ENCODE measurements at regions of chr1 and their contacts with region 1.

Region 1: GRCh38 chr1:166910396-166910994 is 34.4 kb upstream of the TADA1 start:
- DNase-seq: peak; percentile 40 to 92 (median 69)
- ATAC-seq: peak; percentile 99 to 100 (median 100)
- H3K4me3 ChIP-seq: no peak overlapping the region
- H3K4me3 Mint-ChIP-seq: no peak overlapping the region
- H3K27ac ChIP-seq: no peak overlapping the region
- H3K27ac Mint-ChIP-seq: no peak overlapping the region
- H3K4me1 ChIP-seq: no peaks in the 10 kb centered on the region
- H3K4me1 Mint-ChIP-seq: peaks cover 0 to 7% (median 6%) of the 10 kb centered on the region in 3 donors
- H3K27me3 ChIP-seq: peaks cover 0 to 3% of the 10 kb centered on the region in 2 experiments
- H3K27me3 Mint-ChIP-seq: no peaks in the 10 kb centered on the region

Region 2: DNA sequence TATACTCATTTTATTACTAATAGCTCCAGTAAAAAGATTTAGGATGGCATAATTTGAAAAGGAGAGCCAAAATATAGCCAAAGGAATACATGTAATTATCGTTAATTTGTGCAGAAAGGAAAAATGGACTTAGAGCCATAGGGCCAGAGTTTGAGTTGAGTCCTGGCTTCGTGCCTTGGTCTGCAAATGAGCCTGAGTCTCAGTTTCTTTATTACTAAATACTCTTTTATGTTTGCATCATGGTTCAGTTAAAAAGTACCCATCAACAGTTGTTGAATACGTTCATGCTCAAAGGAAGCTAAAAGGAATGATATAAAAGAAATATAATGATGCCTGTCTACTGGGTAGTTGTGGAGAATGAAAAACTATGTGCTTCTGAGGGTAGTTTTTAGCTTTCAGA is 588.0 kb before region 1 on chr1:
- CTCF ChIA-PET with region 1: no interaction called
- POLR2A ChIA-PET with region 1: no interaction called
- DNase-seq: no peak
- ATAC-seq: no peak
- H3K4me3 ChIP-seq: no peak overlapping the region
- H3K4me3 Mint-ChIP-seq: no peak overlapping the region
- H3K27ac ChIP-seq: no peak overlapping the region
- H3K27ac Mint-ChIP-seq: no peak overlapping the region
- H3K4me1 ChIP-seq: no peaks in the 10 kb centered on the region
- H3K4me1 Mint-ChIP-seq: no peaks in the 10 kb centered on the region
- H3K27me3 ChIP-seq: no peaks in the 10 kb centered on the region
- H3K27me3 Mint-ChIP-seq: peaks cover 4 to 10% of the 10 kb centered on the region in 2 donors

Region 3: GRCh38 chr1:166875734-166876539 is 34.6 kb before region 1 on chr1 and contains the start of gene TADA1:
- CTCF ChIA-PET with region 1: interaction called in 1 of 2 experiments, 13 read pairs
- POLR2A ChIA-PET with region 1: no interaction called
- DNase-seq: peak; percentile 93 to 100 (median 99)
- ATAC-seq: peak; percentile 91 to 94 (median 93)
- H3K4me3 ChIP-seq: peak within 1 kb of the TSS; percentile 71 to 75
- H3K4me3 Mint-ChIP-seq: peak within 1 kb of the TSS; percentile 89 to 98 (median 98)
- H3K27ac ChIP-seq: peak within 1 kb of the TSS; percentile 75
- H3K27ac Mint-ChIP-seq: peak within 1 kb of the TSS; percentile 98 to 99
- H3K4me1 ChIP-seq: peaks cover 13 to 16% of the 10 kb centered on the region in 2 experiments
- H3K4me1 Mint-ChIP-seq: peaks cover 43 to 53% (median 50%) of the 10 kb centered on the region in 3 donors
- H3K27me3 ChIP-seq: no peaks in the 10 kb centered on the region
- H3K27me3 Mint-ChIP-seq: no peaks in the 10 kb centered on the region
- total RNA-seq, gene TADA1: 11.1 to 14.6 (median 12.8) TPM

Region 4: DNA sequence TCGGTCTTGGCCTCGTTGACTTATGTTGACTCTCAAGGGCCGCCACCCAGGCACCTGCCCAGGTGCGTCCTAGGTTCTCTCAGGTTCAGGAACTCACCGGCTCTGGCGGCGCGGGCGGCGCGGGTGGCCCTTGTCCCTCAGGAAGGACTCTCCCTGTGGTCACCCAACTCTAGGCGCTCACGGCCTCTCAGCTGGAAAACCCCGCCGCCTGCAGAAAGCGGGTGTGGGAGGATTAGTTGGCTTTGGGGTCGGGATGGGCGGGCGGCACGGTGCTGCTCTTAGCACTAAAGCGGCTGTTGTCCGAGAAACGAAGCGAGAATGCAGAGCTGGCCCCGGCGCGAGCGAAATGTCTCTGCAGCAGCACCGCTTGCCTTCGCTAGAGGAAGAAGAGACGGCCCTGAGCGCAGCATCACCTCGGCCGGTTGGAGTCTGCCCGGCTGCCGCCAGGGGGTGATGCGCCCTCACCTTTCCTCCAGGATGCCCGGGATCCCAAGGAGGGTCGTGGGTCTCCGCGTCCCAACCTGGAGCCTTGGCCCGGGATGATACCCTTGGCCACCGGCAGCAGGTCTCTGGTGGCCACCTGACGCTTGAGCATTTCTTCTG is 26.4 kb before region 1 on chr1:
- CTCF ChIA-PET with region 1: interaction called in 1 of 2 experiments, 12 read pairs
- POLR2A ChIA-PET with region 1: no interaction called
- DNase-seq: peak in 24 of 35 experiments; percentile 3 to 49 (median 14)
- ATAC-seq: peak; percentile 60 to 73 (median 67)
- H3K4me3 ChIP-seq: peak overlapping the region in 1 of 2 donors; percentile 30
- H3K4me3 Mint-ChIP-seq: peak overlapping the region in 1 of 3 donors; percentile 25
- H3K27ac ChIP-seq: no peak overlapping the region
- H3K27ac Mint-ChIP-seq: no peak overlapping the region
- H3K4me1 ChIP-seq: peaks cover 0 to 14% of the 10 kb centered on the region in 2 experiments
- H3K4me1 Mint-ChIP-seq: peaks cover 14 to 19% (median 16%) of the 10 kb centered on the region in 3 donors
- H3K27me3 ChIP-seq: peaks cover 0 to 23% of the 10 kb centered on the region in 2 experiments
- H3K27me3 Mint-ChIP-seq: peaks cover 23 to 29% of the 10 kb centered on the region in 2 donors

Region 5: DNA sequence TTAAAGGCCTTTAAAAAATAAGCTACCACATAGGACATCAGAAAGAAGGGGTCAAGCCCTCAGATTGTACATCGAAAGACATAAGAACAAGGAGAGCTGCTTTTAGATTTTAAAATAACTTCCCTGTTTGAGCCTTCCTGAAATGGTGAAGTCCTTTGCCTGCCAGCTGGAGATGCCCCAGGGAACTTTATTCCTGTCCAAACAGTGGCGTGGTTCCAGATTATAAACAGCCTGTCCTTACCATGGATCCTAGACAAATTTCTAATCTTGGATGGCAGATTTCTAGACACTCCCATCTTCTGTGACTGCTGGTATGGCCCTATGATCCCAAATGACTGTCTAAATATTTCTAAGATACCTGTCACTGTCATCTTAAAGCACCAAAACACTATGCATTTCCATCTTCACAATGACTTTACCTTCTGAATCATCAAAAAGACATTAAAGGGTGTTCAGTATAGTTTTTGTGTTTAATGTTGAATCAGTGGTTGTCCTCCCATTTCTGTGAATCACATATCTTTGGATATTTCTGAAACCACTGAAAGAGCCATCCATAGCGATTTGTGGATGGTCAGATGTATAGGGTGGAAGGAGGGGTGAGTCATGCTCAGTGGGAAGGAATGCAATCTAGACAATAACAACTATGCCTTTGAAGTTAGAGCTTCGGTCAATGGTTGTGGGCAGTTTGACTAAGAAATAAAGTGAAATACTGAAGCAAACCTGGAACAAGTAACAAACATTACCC is 41.7 kb after region 1 on chr1:
- CTCF ChIA-PET with region 1: no interaction called
- POLR2A ChIA-PET with region 1: no interaction called
- DNase-seq: no peak
- ATAC-seq: no peak
- H3K4me3 ChIP-seq: no peak overlapping the region
- H3K4me3 Mint-ChIP-seq: no peak overlapping the region
- H3K27ac ChIP-seq: no peak overlapping the region
- H3K27ac Mint-ChIP-seq: no peak overlapping the region
- H3K4me1 ChIP-seq: peaks cover 0 to 6% of the 10 kb centered on the region in 2 experiments
- H3K4me1 Mint-ChIP-seq: peaks cover 3 to 5% (median 5%) of the 10 kb centered on the region in 3 donors
- H3K27me3 ChIP-seq: peaks cover 0 to 12% of the 10 kb centered on the region in 2 experiments
- H3K27me3 Mint-ChIP-seq: peaks cover 8 to 20% of the 10 kb centered on the region in 2 donors

Region 6: DNA sequence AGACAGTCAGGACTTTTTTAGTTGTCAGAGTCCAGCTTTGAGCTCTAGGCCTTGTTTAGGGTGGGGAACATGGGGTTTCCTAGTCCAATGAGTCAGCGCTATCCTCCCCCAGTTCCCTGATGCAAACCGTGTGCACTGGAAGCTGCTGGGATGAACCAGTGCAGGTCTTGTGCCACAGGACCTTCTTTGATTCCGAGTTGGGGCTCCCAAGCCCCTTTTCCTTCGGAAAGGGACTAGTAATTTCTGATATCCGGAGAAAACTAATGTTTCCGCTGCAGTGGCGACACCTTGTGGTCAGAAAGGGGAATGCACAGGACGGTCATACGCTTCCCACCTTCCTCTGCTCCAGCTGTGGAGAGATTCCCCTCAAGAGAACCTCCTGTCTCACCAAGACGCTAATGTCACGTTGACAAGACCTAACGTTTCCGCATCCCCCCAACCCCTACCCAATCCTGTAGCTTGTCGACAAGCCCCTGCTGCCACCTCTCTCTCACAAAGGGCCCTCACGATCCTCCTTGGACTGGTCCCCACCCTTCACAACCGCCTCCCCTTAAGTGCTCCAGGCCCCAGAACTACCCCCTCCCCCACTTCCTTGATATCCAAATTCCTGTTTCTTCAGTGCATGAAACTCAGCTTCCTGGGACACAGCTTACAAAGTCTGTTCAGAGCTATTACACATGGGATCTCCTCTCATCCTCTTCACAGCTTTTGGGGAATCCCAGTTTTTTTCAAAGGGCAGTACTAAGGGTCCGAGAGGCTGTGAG is 148.7 kb after region 1 on chr1:
- CTCF ChIA-PET with region 1: interaction called, 208 to 325 read pairs
- POLR2A ChIA-PET with region 1: interaction called, 3 to 7 read pairs
- DNase-seq: peak; percentile 12 to 82 (median 60)
- ATAC-seq: peak; percentile 63 to 76 (median 72)
- H3K4me3 ChIP-seq: no peak overlapping the region
- H3K4me3 Mint-ChIP-seq: no peak overlapping the region
- H3K27ac ChIP-seq: no peak overlapping the region
- H3K27ac Mint-ChIP-seq: peak overlapping the region; percentile 57 to 69
- H3K4me1 ChIP-seq: peaks cover 0 to 6% of the 10 kb centered on the region in 2 experiments
- H3K4me1 Mint-ChIP-seq: peaks cover 6 to 8% (median 8%) of the 10 kb centered on the region in 3 donors
- H3K27me3 ChIP-seq: no peaks in the 10 kb centered on the region
- H3K27me3 Mint-ChIP-seq: no peaks in the 10 kb centered on the region

Region 7: GRCh38 chr1:167121375-167122120 is 211.1 kb after region 1 on chr1:
- CTCF ChIA-PET with region 1: interaction called in 1 of 2 experiments, 12 read pairs
- POLR2A ChIA-PET with region 1: no interaction called
- DNase-seq: peak in 30 of 35 experiments; percentile 1 to 49 (median 23)
- ATAC-seq: peak; percentile 77 to 86 (median 82)
- H3K4me3 ChIP-seq: peak overlapping the region; percentile 49 to 79
- H3K4me3 Mint-ChIP-seq: peak overlapping the region; percentile 80 to 87 (median 84)
- H3K27ac ChIP-seq: no peak overlapping the region
- H3K27ac Mint-ChIP-seq: peak overlapping the region; percentile 66 to 67
- H3K4me1 ChIP-seq: peaks cover 0 to 10% of the 10 kb centered on the region in 2 experiments
- H3K4me1 Mint-ChIP-seq: peaks cover 0 to 4% (median 3%) of the 10 kb centered on the region in 3 donors
- H3K27me3 ChIP-seq: peaks cover 0 to 22% of the 10 kb centered on the region in 2 experiments
- H3K27me3 Mint-ChIP-seq: peaks cover 6 to 10% of the 10 kb centered on the region in 2 donors

Measured in T-cell (primary cell).